HCT116 (cell line): ENCODE measurements at regions of chr22 and their contacts with region 1.

Region 1: DNA sequence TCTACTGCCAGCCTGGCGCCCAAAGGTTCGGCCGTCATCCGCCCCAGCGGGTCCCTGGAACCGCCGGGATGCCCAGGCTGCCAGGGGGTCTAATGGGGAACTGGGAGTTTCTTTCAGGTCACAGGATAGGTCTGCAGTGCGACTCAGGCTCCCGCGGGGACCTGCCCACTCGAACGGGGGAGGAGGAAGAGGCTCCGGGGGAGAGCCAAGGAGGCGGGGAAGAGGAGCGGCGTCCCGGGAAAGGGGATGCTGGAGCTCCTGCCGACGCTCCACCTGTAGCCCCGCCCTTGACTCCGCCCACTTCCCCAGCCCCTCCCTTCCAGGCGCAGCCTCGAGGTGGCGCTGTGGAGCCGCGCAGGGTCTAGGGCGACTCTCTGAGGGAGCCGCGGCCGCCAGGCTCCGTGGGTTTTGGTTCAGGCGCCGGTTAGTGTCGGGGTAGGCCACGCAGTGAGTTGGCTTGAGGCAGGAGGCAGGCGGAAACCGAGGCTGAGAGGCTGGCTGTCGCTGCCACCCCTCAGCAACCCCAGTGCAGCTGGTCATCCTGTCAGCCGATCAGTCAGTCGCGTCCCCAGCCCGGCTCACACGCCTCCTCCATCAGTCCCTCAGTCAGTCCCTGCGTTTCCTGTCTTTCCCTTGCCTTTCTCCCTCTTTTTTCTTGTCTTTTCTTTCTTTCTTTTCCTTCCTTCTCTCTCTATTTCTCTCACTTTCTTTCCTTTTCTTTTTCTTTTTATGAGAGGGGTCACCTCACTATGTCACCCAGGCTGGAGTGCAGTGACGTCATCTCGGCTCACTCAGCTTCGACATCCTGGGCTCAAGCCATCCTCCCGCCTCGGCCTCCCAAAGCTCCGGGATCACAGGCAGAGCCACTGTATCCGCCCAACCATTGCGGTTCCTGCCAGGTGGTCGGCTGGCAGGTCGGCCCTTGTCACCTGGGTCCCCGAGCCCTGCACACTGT is 26.4 kb downstream of the YWHAH start:
- DNase-seq: peak; percentile 63
- ATAC-seq: peak; percentile 93
- H3K4me3 ChIP-seq: peak overlapping the region; percentile 51 to 60
- H3K27ac ChIP-seq: no peak overlapping the region; the same call in 1 of the 2 replicates
- H3K4me1 ChIP-seq: peaks cover 2 to 16% of the 10 kb centered on the region in 2 experiments; a peak in 3 of 4 replicates
- H3K27me3 ChIP-seq: no peaks in the 10 kb centered on the region
- CTCF ChIP-seq: peak; percentile 82 to 97 (median 83)
- POLR2A ChIP-seq: no peak
- RAD21 ChIP-seq: peak; percentile 86

Region 2: DNA sequence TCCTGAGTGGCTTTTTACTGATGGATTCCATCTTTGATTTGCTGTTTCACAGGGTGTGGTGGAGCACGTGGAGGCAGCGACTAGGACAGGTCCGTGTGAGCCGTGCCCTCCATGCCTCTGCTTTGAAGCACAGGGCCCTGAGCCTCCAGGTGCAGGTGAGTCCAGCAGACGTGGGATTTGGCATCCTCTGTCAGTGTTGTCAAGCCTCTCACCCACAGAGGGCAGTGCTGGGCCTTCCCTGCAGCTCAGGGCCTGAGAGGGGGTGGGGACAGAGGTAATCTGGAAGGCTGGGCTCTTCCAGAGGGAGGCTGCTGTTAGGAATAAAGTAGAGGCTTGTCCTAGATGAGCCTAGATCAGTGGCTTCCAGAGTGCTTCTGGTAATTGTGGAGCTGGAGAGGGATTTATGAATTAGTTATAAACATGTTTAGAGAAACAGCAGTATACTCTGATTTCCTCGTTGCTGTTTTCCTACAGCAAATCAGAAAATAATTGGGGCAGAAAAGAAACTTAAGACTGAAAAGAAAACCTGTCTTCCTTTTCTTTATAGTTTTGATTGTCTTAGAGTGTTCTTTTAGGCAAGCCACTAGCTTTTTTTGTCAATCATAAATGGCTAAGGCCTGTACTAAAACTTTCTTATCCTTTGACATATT is 409.4 kb before region 1 on chr22:
- CTCF ChIA-PET with region 1: interaction called, 30 read pairs
- POLR2A ChIA-PET with region 1: no interaction called
- RAD21 ChIA-PET with region 1: no interaction called
- intact Hi-C with region 1: loop called (anchors 1 kb)
- DNase-seq: peak; percentile 68
- ATAC-seq: peak; percentile 100
- H3K4me3 ChIP-seq: no peak overlapping the region
- H3K27ac ChIP-seq: no peak overlapping the region
- H3K4me1 ChIP-seq: peaks cover 3 to 10% of the 10 kb centered on the region in 2 experiments; a peak in 3 of 4 replicates
- H3K27me3 ChIP-seq: no peaks in the 10 kb centered on the region
- CTCF ChIP-seq: peak; percentile 72 to 94 (median 79)
- POLR2A ChIP-seq: no peak
- RAD21 ChIP-seq: peak; percentile 78

Region 3: DNA sequence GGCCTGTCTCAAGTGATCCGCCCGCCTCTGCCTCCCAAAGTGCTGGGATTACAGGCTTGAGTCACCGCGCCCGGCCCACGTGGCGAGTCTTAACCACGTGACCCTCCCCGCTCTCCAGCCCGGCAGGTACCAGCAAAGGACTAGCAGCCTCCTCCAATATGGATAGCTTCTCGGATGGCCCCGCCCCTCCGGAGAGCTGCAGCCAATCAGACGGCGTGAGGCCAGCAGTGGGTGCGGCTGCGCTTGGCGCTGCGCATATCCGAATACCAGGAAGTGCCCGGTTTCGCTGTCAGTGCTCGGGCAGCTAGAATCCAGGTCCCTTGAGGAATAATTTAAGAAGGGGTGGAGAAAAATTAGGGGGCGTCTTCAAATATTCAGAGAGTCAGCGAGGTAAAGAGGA is 294.1 kb before region 1 on chr22:
- CTCF ChIA-PET with region 1: interaction called, 16 read pairs
- POLR2A ChIA-PET with region 1: no interaction called
- RAD21 ChIA-PET with region 1: interaction called in 1 of 2 experiments, 5 read pairs
- intact Hi-C with region 1: no loop called
- DNase-seq: peak; percentile 92
- ATAC-seq: peak; percentile 100
- H3K4me3 ChIP-seq: peak overlapping the region; percentile 23 to 51
- H3K27ac ChIP-seq: peak overlapping the region; percentile 49
- H3K4me1 ChIP-seq: peaks cover 12 to 25% of the 10 kb centered on the region in 2 experiments
- H3K27me3 ChIP-seq: no peaks in the 10 kb centered on the region
- CTCF ChIP-seq: no peak
- POLR2A ChIP-seq: no peak
- RAD21 ChIP-seq: no peak

Region 4: GRCh38 chr22:32050678-32051515 is 80.1 kb after region 1 on chr22:
- CTCF ChIA-PET with region 1: interaction called, 11 read pairs
- POLR2A ChIA-PET with region 1: interaction called, 3 read pairs
- RAD21 ChIA-PET with region 1: interaction called in 1 of 2 experiments, 3 read pairs
- intact Hi-C with region 1: no loop called
- DNase-seq: peak; percentile 95
- ATAC-seq: peak; percentile 99
- H3K4me3 ChIP-seq: peak overlapping the region in 1 of 2 experiments; percentile 23; a peak in 2 of 4 replicates
- H3K27ac ChIP-seq: peak overlapping the region; percentile 80
- H3K4me1 ChIP-seq: peaks cover 20 to 32% of the 10 kb centered on the region in 2 experiments
- H3K27me3 ChIP-seq: no peaks in the 10 kb centered on the region
- CTCF ChIP-seq: no peak
- POLR2A ChIP-seq: peak; percentile 55
- RAD21 ChIP-seq: 0 out of 2 replicates have a peak, but pooled peaks have one; percentile 3

Region 5: DNA sequence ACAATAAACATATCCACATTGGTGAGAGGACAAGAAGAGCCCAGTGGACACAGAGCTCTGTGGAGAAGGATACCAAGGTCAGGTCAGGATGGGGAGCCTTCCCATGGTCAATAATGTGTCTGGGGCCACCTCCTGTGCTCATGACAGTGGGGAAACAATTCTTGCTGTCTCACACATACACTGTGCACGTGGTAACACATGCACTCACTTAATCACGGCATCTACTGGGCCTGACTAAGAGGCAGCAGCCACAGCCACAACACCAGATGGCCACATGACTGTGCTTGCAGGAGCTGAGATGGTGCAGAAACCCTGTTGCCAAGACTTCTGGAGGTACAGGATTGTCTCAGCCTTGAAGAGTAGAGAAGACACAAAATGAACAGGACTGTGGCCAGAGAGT is 159.7 kb after region 1 on chr22:
- CTCF ChIA-PET with region 1: no interaction called
- POLR2A ChIA-PET with region 1: no interaction called
- RAD21 ChIA-PET with region 1: no interaction called
- intact Hi-C with region 1: no loop called
- DNase-seq: no peak
- ATAC-seq: no peak
- H3K4me3 ChIP-seq: no peak overlapping the region
- H3K27ac ChIP-seq: no peak overlapping the region
- H3K4me1 ChIP-seq: peaks cover 0 to 3% of the 10 kb centered on the region in 2 experiments; a peak in 2 of 4 replicates
- H3K27me3 ChIP-seq: no peaks in the 10 kb centered on the region
- CTCF ChIP-seq: no peak
- POLR2A ChIP-seq: no peak
- RAD21 ChIP-seq: no peak

Region 6: GRCh38 chr22:32265882-32266767 is 295.4 kb after region 1 on chr22:
- CTCF ChIA-PET with region 1: interaction called, 11 read pairs
- POLR2A ChIA-PET with region 1: no interaction called
- RAD21 ChIA-PET with region 1: no interaction called
- intact Hi-C with region 1: loop called (anchors 5 kb)
- DNase-seq: peak; percentile 44
- ATAC-seq: peak; percentile 85
- H3K4me3 ChIP-seq: no peak overlapping the region
- H3K27ac ChIP-seq: peak overlapping the region; percentile 13; the same call in 1 of the 2 replicates
- H3K4me1 ChIP-seq: peaks cover 3 to 5% of the 10 kb centered on the region in 2 experiments; a peak in 2 of 4 replicates
- H3K27me3 ChIP-seq: no peaks in the 10 kb centered on the region
- CTCF ChIP-seq: peak; percentile 58 to 87 (median 84)
- POLR2A ChIP-seq: no peak
- RAD21 ChIP-seq: peak; percentile 50